GM13976 (cell line): ENCODE measurements at regions of chr13 and their contacts with region 1.

Region 1: GRCh38 chr13:33799950-33800592 is 17.9 kb upstream of the RFC3 start:
- DNase-seq: no peak
- CTCF ChIP-seq: peak; percentile 23

Region 2: DNA sequence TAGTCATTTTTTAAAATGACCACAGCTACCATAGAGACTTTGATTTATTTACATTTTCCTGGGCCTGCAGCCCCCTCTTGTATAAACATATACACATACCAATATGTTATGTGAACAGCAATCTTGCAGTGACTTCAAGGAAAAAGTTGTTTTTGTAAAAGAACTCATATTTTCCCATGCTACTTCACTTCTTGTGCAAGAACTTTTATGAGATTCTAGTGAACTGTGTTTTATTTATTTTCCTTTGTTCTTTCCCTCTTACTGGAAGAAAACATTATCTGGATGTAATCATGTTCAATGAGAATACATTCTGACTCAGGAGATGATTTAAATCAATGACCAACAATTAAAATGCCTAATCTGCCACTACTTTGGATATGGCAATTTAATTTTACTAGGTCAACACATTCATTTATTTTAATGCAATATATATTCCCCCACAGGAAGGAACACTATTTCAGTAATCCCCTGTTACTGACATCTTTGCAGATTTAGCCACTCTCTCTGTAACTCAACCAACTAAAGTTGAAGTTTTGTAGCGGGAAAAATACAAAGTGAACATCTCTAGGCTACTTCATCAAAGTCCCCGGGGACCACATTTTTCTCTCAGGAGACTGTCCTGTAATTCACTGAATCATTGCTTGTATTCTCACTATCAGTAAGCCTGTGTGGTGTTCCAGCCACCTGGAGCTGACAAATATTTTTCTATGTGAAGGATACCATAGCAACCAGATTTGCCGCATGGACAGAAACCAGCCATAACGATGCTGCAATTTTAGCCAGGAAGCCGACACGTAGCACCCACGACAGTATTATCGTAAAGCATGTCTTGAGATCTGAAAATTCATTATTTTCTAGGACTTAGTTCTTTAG is 605.0 kb before region 1 on chr13:
- in situ Hi-C with region 1: no loop called
- DNase-seq: peak; percentile 69
- CTCF ChIP-seq: no peak

Region 3: GRCh38 chr13:33644581-33645543 is 155.2 kb before region 1 on chr13:
- in situ Hi-C with region 1: no loop called
- DNase-seq: no peak
- CTCF ChIP-seq: no peak

Region 4: DNA sequence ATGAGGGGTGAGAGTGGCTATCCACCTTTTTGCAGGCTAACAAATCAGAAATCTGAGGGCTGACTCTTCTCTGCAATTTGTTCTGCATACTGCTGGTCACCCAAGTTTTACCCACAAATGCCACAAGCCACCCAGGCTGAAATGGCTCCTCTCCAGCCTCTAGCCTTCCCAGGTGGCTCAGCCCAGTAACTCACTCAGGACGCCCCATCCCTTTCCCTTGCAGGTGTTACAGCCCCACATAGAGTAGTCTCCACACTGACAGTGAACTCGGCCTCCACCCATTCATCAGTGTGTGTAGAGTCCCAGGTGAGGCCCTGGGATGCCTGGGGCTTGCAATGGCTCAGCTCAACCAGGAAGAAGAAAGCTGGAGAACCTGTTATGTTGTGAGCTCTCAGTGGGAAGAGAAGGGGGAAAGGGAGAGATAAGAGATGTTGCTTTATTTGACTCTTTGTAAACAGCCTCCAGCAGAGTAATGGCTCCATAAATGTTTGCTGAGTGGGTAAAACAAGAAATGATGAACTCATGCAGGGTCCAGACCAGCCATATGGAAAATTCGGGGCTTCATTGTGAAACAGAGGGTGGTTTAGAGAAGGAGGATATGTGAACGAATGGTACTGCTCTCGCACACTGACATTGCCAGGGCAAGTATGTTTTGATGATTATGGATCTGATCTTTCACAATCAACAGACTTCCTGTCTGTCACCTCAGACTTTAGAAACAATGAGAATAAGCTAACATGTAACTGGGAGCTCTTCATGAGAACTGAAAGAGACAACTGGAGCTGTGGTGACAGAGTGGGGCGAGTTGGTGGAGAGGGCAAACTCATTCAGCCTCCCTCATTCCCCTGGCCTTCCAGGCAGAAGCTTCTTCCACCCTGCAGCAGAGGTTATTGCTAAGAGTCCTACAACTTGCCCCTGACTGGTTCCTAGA is 56.4 kb before region 1 on chr13:
- in situ Hi-C with region 1: no loop called
- DNase-seq: peak; percentile 36
- CTCF ChIP-seq: no peak

Region 5: GRCh38 chr13:34076943-34077703 is 277.1 kb after region 1 on chr13:
- in situ Hi-C with region 1: loop called (anchors 10 kb)
- DNase-seq: no peak
- CTCF ChIP-seq: peak; percentile 7

Region 6: GRCh38 chr13:34951528-34951927 is 1151.5 kb after region 1 on chr13:
- in situ Hi-C with region 1: no loop called
- DNase-seq: no peak
- CTCF ChIP-seq: no peak